Activated CD4-positive, alpha-beta T cell treated with anti-CD3 and anti-CD28 coated beads, Interleukin-2, amount 10 ng/mL, durations not matched to agents 24 days and 14 days (primary cell): ENCODE measurements at regions of chr1 and their contacts with region 1.

Region 1: GRCh38 chr1:224329842-224330753 is at the start of gene NVL:
- DNase-seq: peak; percentile 93
- H3K4me3 Mint-ChIP-seq: peak within 1 kb of the TSS; percentile 100
- H3K27ac Mint-ChIP-seq: peak within 1 kb of the TSS; percentile 99
- H3K4me1 Mint-ChIP-seq: peaks cover 46% of the 10 kb centered on the region
- H3K27me3 Mint-ChIP-seq: no peaks in the 10 kb centered on the region
- total RNA-seq, gene NVL: 41.4 and 52.4 TPM in 2 replicates

Region 2: DNA sequence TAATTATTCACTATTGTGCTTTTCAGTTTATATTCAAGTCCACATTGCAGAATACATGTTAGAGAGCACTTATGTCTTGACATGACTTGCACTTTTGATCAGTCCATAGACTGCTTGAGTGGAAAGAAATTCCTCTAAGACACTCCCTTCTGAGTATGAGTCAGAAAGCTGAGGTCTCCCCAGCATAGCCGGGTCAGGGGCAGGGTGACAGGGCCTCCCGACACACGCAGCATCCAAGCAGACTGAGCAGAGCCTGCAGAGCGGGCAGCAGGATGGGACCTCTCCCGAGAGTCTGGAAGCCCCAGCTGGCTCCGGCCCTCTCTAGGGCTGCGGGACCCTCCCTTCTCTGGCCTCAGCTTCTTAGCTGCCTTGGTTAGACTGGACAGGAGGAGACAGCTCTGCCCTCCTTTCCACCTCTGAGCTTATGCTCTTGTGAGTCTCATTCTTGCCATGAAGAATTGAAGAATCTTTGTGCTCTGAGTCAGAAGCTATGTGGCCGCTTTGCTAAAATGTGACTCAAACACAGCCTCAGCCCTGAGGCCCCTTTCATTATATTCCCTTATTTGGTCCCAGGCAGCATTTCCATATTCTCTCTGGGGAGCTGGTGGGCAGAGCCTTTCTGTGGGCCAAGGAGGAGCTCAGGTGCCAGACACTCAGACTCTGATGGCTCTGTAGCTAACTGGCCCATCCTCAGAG is 629.0 kb before region 1 on chr1:
- intact Hi-C with region 1: loop called (anchors 5 kb)
- DNase-seq: no peak
- H3K4me3 Mint-ChIP-seq: peak overlapping the region; percentile 67
- H3K27ac Mint-ChIP-seq: peak overlapping the region; percentile 91
- H3K4me1 Mint-ChIP-seq: peaks cover 51% of the 10 kb centered on the region
- H3K27me3 Mint-ChIP-seq: peaks cover 6% of the 10 kb centered on the region

Region 3: DNA sequence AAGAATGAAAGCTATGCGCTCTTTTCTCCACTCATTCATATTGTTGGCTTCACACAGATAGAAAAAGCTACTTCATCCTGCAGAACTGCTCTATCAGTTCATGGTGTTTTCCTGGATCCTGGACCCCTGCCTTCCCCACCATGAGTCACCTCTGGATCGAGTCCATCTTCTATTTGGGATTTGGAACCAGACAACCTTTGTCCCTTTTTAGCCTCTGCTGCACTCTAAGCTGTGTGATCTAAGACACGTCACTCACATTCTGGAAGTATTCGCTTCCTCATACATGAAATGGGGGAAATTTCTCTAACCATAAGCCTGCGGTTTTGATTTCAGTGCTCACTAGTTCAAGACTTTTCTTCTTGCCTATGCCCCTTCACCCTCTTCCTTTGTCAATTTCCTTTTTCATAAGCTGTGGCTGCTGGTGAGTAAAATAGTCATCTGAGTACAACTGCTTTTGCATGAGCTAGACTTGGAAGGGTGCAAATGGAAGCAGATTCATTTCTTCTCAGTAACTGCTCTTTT is 161.2 kb before region 1 on chr1:
- intact Hi-C with region 1: loop called (anchors 2 kb)
- DNase-seq: peak; percentile 87
- H3K4me3 Mint-ChIP-seq: peak overlapping the region; percentile 68
- H3K27ac Mint-ChIP-seq: peak overlapping the region; percentile 90
- H3K4me1 Mint-ChIP-seq: peaks cover 37% of the 10 kb centered on the region
- H3K27me3 Mint-ChIP-seq: peaks cover 3% of the 10 kb centered on the region

Region 4: DNA sequence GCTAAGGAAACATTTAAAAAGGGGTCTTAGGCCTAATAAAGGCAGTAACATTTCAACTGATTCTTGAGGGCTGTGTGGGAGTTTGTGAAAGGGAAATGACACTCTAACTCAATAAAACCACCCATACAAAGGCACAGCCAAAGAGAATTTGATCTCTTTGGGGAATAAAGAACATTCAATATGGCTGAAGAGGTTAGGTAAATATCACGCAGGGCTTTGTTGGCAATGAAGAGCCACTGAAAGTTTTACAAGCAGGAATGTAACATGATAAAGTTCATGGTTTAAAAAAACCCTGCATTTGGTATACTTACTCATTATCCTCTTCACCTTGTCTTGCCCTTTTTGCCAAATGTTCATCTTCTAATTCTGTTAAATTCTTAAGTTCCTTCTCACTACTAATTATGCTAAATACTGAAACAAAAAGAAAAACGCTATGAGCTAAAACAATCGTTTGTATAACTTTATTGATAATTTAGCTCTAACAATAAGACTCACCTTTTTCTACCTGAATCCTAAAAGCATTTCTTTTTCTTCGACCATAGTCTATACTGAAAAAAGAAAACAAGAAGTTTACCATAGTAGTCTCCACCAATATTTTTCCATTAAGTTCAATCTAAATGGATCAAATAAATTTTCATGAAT is 12.6 kb before region 1 on chr1:
- intact Hi-C with region 1: loop called (anchors 1 kb)
- DNase-seq: no peak
- H3K4me3 Mint-ChIP-seq: no peak overlapping the region
- H3K27ac Mint-ChIP-seq: no peak overlapping the region
- H3K4me1 Mint-ChIP-seq: peaks cover 10% of the 10 kb centered on the region
- H3K27me3 Mint-ChIP-seq: no peaks in the 10 kb centered on the region

Region 5: DNA sequence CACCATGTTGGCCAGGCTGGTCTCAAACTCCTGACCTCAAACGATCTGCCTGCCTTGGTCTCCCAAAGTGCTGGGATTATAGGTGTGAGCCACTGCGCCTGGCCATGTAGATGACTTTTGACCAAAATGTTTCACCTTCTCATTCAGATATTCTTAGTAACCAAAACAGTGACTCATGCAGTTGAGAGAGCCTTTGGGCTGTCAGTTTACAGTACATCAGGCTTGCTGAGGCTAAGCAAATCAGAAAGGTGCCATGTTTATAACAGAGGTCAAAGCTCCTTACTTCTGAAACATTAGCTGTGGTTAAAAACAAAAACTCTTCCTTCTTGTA is 47.5 kb after region 1 on chr1:
- intact Hi-C with region 1: loop called (anchors 1 kb)
- DNase-seq: peak; percentile 71
- H3K4me3 Mint-ChIP-seq: peak overlapping the region; percentile 56
- H3K27ac Mint-ChIP-seq: peak overlapping the region; percentile 84
- H3K4me1 Mint-ChIP-seq: peaks cover 84% of the 10 kb centered on the region
- H3K27me3 Mint-ChIP-seq: no peaks in the 10 kb centered on the region

Region 6: DNA sequence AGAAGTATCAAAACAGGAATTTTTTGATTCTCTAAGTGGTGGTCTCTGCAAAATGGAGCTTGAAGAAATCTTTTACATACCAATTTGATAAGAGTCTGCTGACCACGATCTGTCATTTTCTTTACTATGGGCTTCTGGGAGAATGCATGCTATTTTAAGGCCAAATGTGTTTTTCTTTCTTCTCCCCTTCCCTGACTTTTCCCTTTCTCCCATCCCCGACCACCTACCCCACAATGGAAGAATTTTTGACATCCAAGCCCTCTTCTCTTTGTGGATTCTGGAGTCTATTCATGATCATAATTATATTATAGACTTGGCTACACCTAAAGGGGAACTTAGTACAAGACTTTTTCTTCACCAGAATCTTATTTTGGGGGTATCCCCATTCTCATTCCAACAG is 57.8 kb after region 1 on chr1:
- intact Hi-C with region 1: no loop called
- DNase-seq: no peak
- H3K4me3 Mint-ChIP-seq: no peak overlapping the region
- H3K27ac Mint-ChIP-seq: no peak overlapping the region
- H3K4me1 Mint-ChIP-seq: peaks cover 24% of the 10 kb centered on the region
- H3K27me3 Mint-ChIP-seq: no peaks in the 10 kb centered on the region

Region 7: GRCh38 chr1:224438989-224439388 is 108.9 kb after region 1 on chr1:
- intact Hi-C with region 1: no loop called
- DNase-seq: no peak
- H3K4me3 Mint-ChIP-seq: no peak overlapping the region
- H3K27ac Mint-ChIP-seq: no peak overlapping the region
- H3K4me1 Mint-ChIP-seq: peaks cover 20% of the 10 kb centered on the region
- H3K27me3 Mint-ChIP-seq: no peaks in the 10 kb centered on the region